Naive thymus-derived CD4-positive, alpha-beta T cell (primary cell): ENCODE measurements at regions of chr9 and their contacts with region 1.

Region 1: GRCh38 chr9:7055201-7055903 is 297.6 kb downstream of the KDM4C start:
- DNase-seq: no peak
- ATAC-seq: no peak
- H3K4me3 ChIP-seq: no peak overlapping the region
- H3K4me3 Mint-ChIP-seq: no peak overlapping the region
- H3K27ac ChIP-seq: no peak overlapping the region
- H3K27ac Mint-ChIP-seq: peak overlapping the region in 1 of 9 donors; percentile 30
- H3K4me1 ChIP-seq: no peaks in the 10 kb centered on the region
- H3K4me1 Mint-ChIP-seq: peaks cover 0 to 7% (median 5%) of the 10 kb centered on the region in 7 donors
- H3K27me3 ChIP-seq: no peaks in the 10 kb centered on the region
- H3K27me3 Mint-ChIP-seq: no peaks in the 10 kb centered on the region

Region 2: GRCh38 chr9:6827439-6827838 is 227.9 kb before region 1 on chr9:
- CTCF ChIA-PET with region 1: no interaction called
- POLR2A ChIA-PET with region 1: no interaction called
- intact Hi-C with region 1: loop called in 1 of 2 experiments (anchors 2 kb)
- DNase-seq: peak in 8 of 9 donors; percentile 2 to 48 (median 38)
- ATAC-seq: peak; percentile 54
- H3K4me3 ChIP-seq: no peak overlapping the region
- H3K4me3 Mint-ChIP-seq: no peak overlapping the region
- H3K27ac ChIP-seq: no peak overlapping the region
- H3K27ac Mint-ChIP-seq: peak overlapping the region in 3 of 9 donors; percentile 5 to 53 (median 35)
- H3K4me1 ChIP-seq: no peaks in the 10 kb centered on the region
- H3K4me1 Mint-ChIP-seq: peaks cover 1 to 23% (median 8%) of the 10 kb centered on the region in 7 donors
- H3K27me3 ChIP-seq: no peaks in the 10 kb centered on the region
- H3K27me3 Mint-ChIP-seq: no peaks in the 10 kb centered on the region

Region 3: GRCh38 chr9:7186175-7186574 is 130.8 kb after region 1 on chr9:
- CTCF ChIA-PET with region 1: no interaction called
- POLR2A ChIA-PET with region 1: no interaction called
- intact Hi-C with region 1: loop called in 1 of 2 experiments (anchors 1 kb)
- DNase-seq: no peak
- ATAC-seq: no peak
- H3K4me3 ChIP-seq: no peak overlapping the region
- H3K4me3 Mint-ChIP-seq: no peak overlapping the region
- H3K27ac ChIP-seq: no peak overlapping the region
- H3K27ac Mint-ChIP-seq: no peak overlapping the region
- H3K4me1 ChIP-seq: no peaks in the 10 kb centered on the region
- H3K4me1 Mint-ChIP-seq: no peaks in the 10 kb centered on the region
- H3K27me3 ChIP-seq: no peaks in the 10 kb centered on the region
- H3K27me3 Mint-ChIP-seq: no peaks in the 10 kb centered on the region

Region 4: DNA sequence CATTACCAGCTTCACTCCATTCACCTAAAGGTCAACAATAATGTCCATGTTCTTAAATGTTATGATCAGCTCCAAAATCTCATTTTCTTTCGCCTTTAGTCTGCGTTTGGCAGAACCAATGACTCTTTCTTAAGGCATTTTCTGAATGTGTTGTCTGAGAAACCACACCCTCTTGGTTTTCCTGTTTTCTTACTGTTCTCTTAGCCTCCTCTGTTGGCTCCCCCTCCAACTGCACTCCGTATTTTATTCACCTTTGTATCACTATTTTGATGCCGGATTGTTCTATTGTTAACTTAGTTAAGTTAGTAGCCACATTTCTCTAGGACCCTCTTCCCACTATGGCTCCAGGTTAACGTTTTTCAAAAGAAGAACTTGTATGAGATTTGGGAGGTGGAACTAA is 558.6 kb after region 1 on chr9:
- CTCF ChIA-PET with region 1: no interaction called
- POLR2A ChIA-PET with region 1: no interaction called
- intact Hi-C with region 1: loop called in 1 of 2 experiments (anchors 5 kb)
- DNase-seq: peak in 6 of 9 donors; percentile 15 to 59 (median 46)
- ATAC-seq: peak; percentile 70
- H3K4me3 ChIP-seq: peak overlapping the region; percentile 0
- H3K4me3 Mint-ChIP-seq: peak overlapping the region; percentile 68 to 90 (median 82)
- H3K27ac ChIP-seq: peak overlapping the region; percentile 31
- H3K27ac Mint-ChIP-seq: peak overlapping the region; percentile 71 to 87 (median 85)
- H3K4me1 ChIP-seq: peaks cover 9 to 29% of the 10 kb centered on the region in 2 donors
- H3K4me1 Mint-ChIP-seq: peaks cover 18 to 50% (median 38%) of the 10 kb centered on the region in 7 donors
- H3K27me3 ChIP-seq: no peaks in the 10 kb centered on the region
- H3K27me3 Mint-ChIP-seq: peaks cover 0 to 17% (median 0%) of the 10 kb centered on the region in 5 donors

Region 5: DNA sequence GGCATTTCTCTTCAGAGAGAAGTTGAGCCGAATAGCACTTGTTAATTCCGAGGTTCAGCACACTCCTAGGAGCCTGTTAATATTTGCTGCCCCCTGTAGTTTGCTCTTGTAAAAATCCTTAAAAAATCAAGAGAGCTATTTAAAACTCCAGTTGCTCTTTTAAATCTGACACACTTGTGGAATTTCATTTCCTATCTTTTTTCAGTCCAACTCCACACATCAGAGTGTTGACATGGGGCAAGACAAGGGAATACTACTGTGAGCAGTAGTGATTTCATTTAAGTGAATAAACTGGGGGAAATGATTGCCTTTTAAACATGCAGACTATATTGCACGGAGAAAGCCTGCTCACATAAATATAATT is 1840.5 kb after region 1 on chr9:
- CTCF ChIA-PET with region 1: no interaction called
- POLR2A ChIA-PET with region 1: no interaction called
- intact Hi-C with region 1: loop called in 1 of 2 experiments (anchors 10 kb)
- DNase-seq: peak in 4 of 9 donors; percentile 1 to 7 (median 3)
- ATAC-seq: no peak
- H3K4me3 ChIP-seq: no peak overlapping the region
- H3K4me3 Mint-ChIP-seq: no peak overlapping the region
- H3K27ac ChIP-seq: no peak overlapping the region
- H3K27ac Mint-ChIP-seq: no peak overlapping the region
- H3K4me1 ChIP-seq: no peaks in the 10 kb centered on the region
- H3K4me1 Mint-ChIP-seq: no peaks in the 10 kb centered on the region
- H3K27me3 ChIP-seq: no peaks in the 10 kb centered on the region
- H3K27me3 Mint-ChIP-seq: peaks cover 0 to 7% (median 3%) of the 10 kb centered on the region in 5 donors